ENCODE measurements at regions of chr3 and their contacts with region 1.

Region 1: GRCh38 chr3:196432137-196432879 is at the start of gene UBXN7:
- DNase-seq: peak; percentile 99
- total RNA-seq, gene UBXN7: 30.1 TPM

Region 2: GRCh38 chr3:196163687-196164493 is 268.4 kb before region 1 on chr3:
- intact Hi-C with region 1: no loop called
- DNase-seq: no peak

Region 3: GRCh38 chr3:196274585-196274984 is 157.7 kb before region 1 on chr3:
- intact Hi-C with region 1: no loop called
- DNase-seq: no peak

Region 4: GRCh38 chr3:196317687-196318467 is 114.4 kb before region 1 on chr3 and contains the start of gene DYNLT2B:
- intact Hi-C with region 1: loop called (anchors 1 kb)
- DNase-seq: peak; percentile 95
- total RNA-seq, gene DYNLT2B: 5.0 TPM

Region 5: GRCh38 chr3:196406811-196407470 is 25.4 kb before region 1 on chr3:
- intact Hi-C with region 1: no loop called
- DNase-seq: no peak

Region 6: GRCh38 chr3:196502775-196503195 is 70.5 kb after region 1 on chr3:
- intact Hi-C with region 1: loop called (anchors 2 kb)
- DNase-seq: peak; percentile 80